Thyroid gland (tissue), 4 donors: ENCODE measurements at regions of chr1 and their contacts with region 1.

Region 1: DNA sequence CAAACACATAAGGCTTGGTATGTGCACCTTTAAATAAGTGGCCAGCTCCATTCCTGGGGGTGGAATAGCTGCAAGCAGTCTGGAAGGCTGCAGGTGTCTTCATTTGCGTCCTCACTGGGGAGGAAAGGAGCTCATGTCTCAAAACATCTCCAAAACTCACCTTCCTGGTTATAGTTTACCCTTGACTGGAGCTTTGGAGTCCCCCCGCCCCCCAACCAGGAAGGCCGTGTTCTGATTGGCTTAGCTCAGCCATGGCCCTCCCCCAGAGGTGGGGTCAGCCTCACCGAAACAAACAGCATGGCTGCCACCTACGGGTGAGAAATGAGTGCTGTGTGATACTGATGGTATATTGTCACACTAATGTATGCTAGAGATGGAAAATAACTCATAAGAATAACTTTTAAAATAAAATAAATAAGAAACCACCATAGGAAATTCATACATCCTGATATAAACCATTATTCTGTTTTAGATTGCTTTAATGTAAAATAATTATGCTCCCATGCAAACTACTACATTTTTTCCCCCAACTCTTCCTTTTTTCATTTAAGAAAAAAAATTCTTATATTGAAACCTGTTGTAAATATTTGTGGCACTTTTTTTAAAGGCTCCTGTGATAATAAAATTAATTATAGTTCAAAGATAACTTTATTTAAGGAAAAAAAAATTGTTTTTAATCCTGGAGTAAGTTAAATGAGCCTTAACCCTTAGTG is 90.8 kb downstream of the ZP4 start:
- DNase-seq: peak; percentile 87 to 92
- H3K4me3 ChIP-seq: no peak overlapping the region
- H3K27ac ChIP-seq: peak overlapping the region in 1 of 3 donors; percentile 45
- H3K4me1 ChIP-seq: peaks cover 0 to 4% of the 10 kb centered on the region in 2 donors
- H3K27me3 ChIP-seq: no peaks in the 10 kb centered on the region
- CTCF ChIP-seq: peak in 4 of 6 experiments; percentile 49 to 77 (median 64)
- POLR2A ChIP-seq: peak in 1 of 2 donors; percentile 65

Region 2: GRCh38 chr1:237684236-237684635 is 115.7 kb before region 1 on chr1:
- intact Hi-C with region 1: loop called (anchors 5 kb)
- DNase-seq: no peak
- H3K4me3 ChIP-seq: no peak overlapping the region
- H3K27ac ChIP-seq: no peak overlapping the region
- H3K4me1 ChIP-seq: peaks cover 0 to 6% of the 10 kb centered on the region in 2 donors
- H3K27me3 ChIP-seq: no peaks in the 10 kb centered on the region
- CTCF ChIP-seq: no peak
- POLR2A ChIP-seq: no peak

Region 3: DNA sequence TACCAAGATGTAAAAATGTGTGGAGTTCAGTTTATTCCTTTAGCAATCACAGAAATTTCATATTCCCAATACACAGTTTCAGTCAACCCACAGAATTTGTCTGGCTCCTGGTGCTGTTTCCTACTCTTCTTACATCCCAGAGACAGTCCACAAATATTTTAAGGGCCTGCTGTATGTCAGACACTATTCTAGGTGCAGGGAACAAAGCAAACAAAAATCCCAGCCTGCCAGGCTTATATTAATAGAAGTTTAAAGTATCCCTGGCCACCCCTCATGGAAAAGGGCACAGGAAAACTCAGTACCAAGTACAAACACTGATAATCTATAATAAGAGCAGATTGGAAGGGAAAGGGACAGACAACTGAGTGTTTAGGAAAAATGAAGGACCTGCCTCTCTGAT is 104.0 kb before region 1 on chr1:
- intact Hi-C with region 1: no loop called
- DNase-seq: no peak
- H3K4me3 ChIP-seq: no peak overlapping the region
- H3K27ac ChIP-seq: no peak overlapping the region
- H3K4me1 ChIP-seq: no peaks in the 10 kb centered on the region
- H3K27me3 ChIP-seq: no peaks in the 10 kb centered on the region
- CTCF ChIP-seq: no peak
- POLR2A ChIP-seq: no peak